ENCODE measurements at regions of chr2 and their contacts with region 1.

Region 1: GRCh38 chr2:53715568-53715967 is 52.0 kb upstream of the CHAC2 start:
- DNase-seq: peak; percentile 14
- H3K4me3 Mint-ChIP-seq: no peak overlapping the region
- H3K27ac Mint-ChIP-seq: no peak overlapping the region
- H3K4me1 Mint-ChIP-seq: no peaks in the 10 kb centered on the region
- H3K27me3 Mint-ChIP-seq: no peaks in the 10 kb centered on the region
- CTCF ChIP-seq: peak; percentile 39

Region 2: DNA sequence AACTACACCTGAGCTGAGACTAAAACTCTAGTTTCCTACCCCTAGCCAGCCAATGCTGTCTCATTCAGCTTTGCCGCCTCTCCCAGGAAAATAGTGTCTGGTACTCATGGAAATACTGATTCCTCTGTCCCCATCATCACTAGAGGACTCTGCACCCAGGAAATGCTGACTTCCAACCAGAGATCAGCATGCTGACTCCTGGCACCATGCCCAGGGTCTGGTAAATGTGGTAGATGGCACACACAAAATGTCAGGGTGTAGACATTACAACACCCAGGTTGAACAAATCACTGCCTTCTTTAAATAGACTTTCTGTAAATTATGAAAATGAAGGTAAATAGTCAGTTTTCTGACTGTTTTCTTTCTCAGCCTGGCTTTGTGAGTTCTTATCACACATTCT is 255.2 kb before region 1 on chr2:
- CTCF ChIA-PET with region 1: no interaction called
- POLR2A ChIA-PET with region 1: no interaction called
- intact Hi-C with region 1: loop called (anchors 1 kb)
- DNase-seq: peak; percentile 89
- H3K4me3 Mint-ChIP-seq: no peak overlapping the region
- H3K27ac Mint-ChIP-seq: no peak overlapping the region
- H3K4me1 Mint-ChIP-seq: no peaks in the 10 kb centered on the region
- H3K27me3 Mint-ChIP-seq: no peaks in the 10 kb centered on the region
- CTCF ChIP-seq: peak; percentile 25